Panc1 (cell line): ENCODE measurements at regions of chr14 and their contacts with region 1.

Region 1: GRCh38 chr14:75051555-75051898 is 260 bp upstream of the MLH3 start:
- DNase-seq: no peak
- ATAC-seq: peak; percentile 41; the same call in 1 of the 2 replicates
- H3K4me3 ChIP-seq: peak overlapping the region; percentile 57 to 65
- H3K27ac ChIP-seq: peak overlapping the region; percentile 85
- H3K4me1 ChIP-seq: no peaks in the 10 kb centered on the region
- H3K27me3 ChIP-seq: no peaks in the 10 kb centered on the region
- CTCF ChIP-seq: no peak

Region 2: GRCh38 chr14:74963705-74964271 is 87.7 kb before region 1 on chr14:
- CTCF ChIA-PET with region 1: no interaction called
- POLR2A ChIA-PET with region 1: no interaction called
- in situ Hi-C with region 1: no loop called
- intact Hi-C with region 1: no loop called
- DNase-seq: no peak
- ATAC-seq: peak; percentile 20; the same call in 1 of the 2 replicates
- H3K4me3 ChIP-seq: no peak overlapping the region
- H3K27ac ChIP-seq: no peak overlapping the region
- H3K4me1 ChIP-seq: no peaks in the 10 kb centered on the region
- H3K27me3 ChIP-seq: no peaks in the 10 kb centered on the region
- CTCF ChIP-seq: no peak

Region 3: GRCh38 chr14:74988131-74988530 is 63.4 kb before region 1 on chr14:
- CTCF ChIA-PET with region 1: no interaction called
- POLR2A ChIA-PET with region 1: interaction called, 12 read pairs
- in situ Hi-C with region 1: no loop called
- intact Hi-C with region 1: no loop called
- DNase-seq: no peak
- ATAC-seq: peak; percentile 71; the same call in 1 of the 2 replicates
- H3K4me3 ChIP-seq: no peak overlapping the region
- H3K27ac ChIP-seq: no peak overlapping the region
- H3K4me1 ChIP-seq: no peaks in the 10 kb centered on the region
- H3K27me3 ChIP-seq: no peaks in the 10 kb centered on the region
- CTCF ChIP-seq: no peak

Region 4: DNA sequence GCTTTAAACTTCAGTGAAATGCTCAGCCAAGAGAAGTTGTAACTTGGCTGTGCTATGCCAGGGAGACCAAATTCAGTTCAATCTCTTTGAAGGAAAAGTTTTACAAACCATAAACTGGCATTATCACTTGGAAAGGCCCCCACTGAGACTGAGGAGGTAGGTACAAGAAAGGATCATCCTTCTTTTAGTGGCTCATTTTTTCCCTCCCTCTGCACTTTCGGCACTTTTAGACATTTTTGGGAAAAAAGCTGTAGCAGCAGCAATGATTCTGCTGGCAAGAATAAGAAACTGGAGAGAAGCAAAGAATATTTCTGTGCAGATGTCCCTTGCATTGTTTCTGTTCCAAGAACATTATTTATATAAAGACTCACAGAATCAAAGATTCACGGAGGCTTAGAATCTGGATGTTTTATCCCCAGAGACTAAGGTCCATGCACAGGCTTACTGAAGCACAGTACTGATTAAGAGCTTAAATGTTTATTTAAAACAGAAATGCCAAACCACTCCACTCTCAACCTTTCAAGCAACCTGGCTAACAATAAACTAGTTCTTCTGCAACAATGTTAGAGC is 30.2 kb after region 1 on chr14:
- CTCF ChIA-PET with region 1: no interaction called
- POLR2A ChIA-PET with region 1: no interaction called
- in situ Hi-C with region 1: no loop called
- intact Hi-C with region 1: no loop called
- DNase-seq: no peak
- ATAC-seq: no peak
- H3K4me3 ChIP-seq: no peak overlapping the region
- H3K27ac ChIP-seq: no peak overlapping the region
- H3K4me1 ChIP-seq: no peaks in the 10 kb centered on the region
- H3K27me3 ChIP-seq: no peaks in the 10 kb centered on the region
- CTCF ChIP-seq: no peak